ENCODE measurements at regions of chr12 and their contacts with region 1.

Region 1: DNA sequence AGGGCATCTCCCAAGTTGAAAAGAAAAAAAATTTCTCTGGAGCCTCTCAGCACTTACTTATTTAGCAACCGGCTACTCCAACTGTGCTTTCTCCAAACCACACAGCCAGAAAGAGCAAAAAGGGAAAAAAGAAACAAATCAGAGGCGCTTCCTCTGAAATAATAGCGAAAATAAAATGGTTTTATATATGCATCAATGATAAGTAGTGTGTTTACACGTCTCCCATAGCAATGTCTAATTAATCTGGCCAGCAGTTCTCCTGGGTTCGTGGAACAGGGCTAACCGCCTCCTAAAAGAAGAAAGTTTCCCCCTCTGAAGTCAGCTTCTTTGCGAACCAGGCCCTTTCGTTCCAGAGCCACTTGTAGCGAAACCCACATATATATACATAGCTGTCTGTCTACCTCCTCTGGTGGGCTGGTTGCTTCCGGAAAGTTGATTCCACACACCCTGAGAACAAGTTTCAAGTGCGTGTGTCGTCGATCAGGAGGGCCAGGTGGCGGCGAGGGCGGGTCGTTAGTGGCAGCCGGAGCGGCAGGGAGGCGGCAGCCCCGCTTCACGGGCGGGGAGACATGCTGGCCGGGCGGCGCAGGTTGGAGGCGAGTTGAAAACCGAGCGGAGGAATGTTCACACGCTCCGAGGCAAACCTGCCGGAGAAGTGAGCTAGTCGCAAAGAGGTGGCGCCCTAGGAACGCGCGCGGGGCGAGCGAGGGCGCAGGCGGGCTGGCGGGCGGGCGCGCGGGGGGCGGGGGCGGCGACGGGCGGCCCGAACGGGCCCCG is 2.7 kb downstream of the PTHLH start:
- DNase-seq: peak; percentile 59 to 82
- ATAC-seq: peak; percentile 68
- H3K4me3 ChIP-seq: peak overlapping the region; percentile 46 to 64
- H3K27ac ChIP-seq: no peak overlapping the region
- H3K4me1 ChIP-seq: peaks cover 0 to 1% of the 10 kb centered on the region in 2 donors
- H3K27me3 ChIP-seq: no peaks in the 10 kb centered on the region

Region 2: DNA sequence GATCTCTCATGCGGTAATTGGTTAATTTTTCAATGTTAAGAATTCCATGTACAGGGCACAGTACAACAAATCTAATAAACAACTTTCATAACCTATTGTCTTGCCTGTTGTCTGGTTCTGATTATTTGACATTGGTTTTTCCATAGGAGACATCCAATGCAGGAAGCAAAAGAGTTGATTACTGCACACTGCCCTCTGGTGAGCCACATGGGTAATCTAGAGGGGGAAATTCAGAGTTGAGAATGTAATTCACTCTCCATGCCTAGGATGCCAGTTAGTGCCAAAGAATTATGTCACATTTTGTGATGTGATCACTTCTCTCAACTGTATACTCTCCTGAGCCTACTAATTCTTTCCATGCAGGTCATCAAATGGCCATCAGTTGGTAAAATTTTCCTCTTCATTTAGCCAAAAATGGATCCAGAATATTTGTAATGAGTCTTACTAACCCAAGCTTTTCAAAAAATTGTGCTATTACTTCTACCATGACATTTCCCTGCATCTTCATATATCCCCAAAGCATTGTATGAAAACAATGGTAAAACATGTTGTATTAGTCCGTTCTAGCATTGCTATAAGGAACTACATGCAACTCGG is 202.7 kb after region 1 on chr12:
- intact Hi-C with region 1: loop called in 1 of 2 experiments (anchors 2 kb)
- DNase-seq: no peak
- ATAC-seq: peak; percentile 70
- H3K4me3 ChIP-seq: no peak overlapping the region
- H3K27ac ChIP-seq: no peak overlapping the region
- H3K4me1 ChIP-seq: no peaks in the 10 kb centered on the region
- H3K27me3 ChIP-seq: peaks cover 0 to 1% of the 10 kb centered on the region in 2 donors

Region 3: GRCh38 chr12:28190321-28191050 is 220.7 kb after region 1 on chr12 and contains the start of gene CCDC91:
- intact Hi-C with region 1: loop called in 1 of 2 experiments (anchors 5 kb)
- DNase-seq: peak; percentile 92 to 95
- ATAC-seq: peak; percentile 95
- H3K4me3 ChIP-seq: peak within 1 kb of the TSS; percentile 65 to 85
- H3K27ac ChIP-seq: peak within 1 kb of the TSS; percentile 78 to 92
- H3K4me1 ChIP-seq: peaks cover 0 to 3% of the 10 kb centered on the region in 2 donors
- H3K27me3 ChIP-seq: no peaks in the 10 kb centered on the region
- total RNA-seq, gene CCDC91: 27.5 to 30.1 TPM